HAP-1 (cell line): ENCODE measurements at regions of chr6 and their contacts with region 1.

Region 1: GRCh38 chr6:123415844-123416468 is 220.8 kb downstream of the TRDN start:
- DNase-seq: peak; percentile 63 to 77
- H3K4me3 ChIP-seq: no peak overlapping the region
- H3K4me1 ChIP-seq: peaks cover 34% of the 10 kb centered on the region
- H3K27me3 ChIP-seq: no peaks in the 10 kb centered on the region

Region 2: GRCh38 chr6:123712831-123713230 is 296.9 kb after region 1 on chr6:
- in situ Hi-C with region 1: loop called (anchors 5 kb)
- DNase-seq: no peak
- H3K4me3 ChIP-seq: no peak overlapping the region
- H3K4me1 ChIP-seq: no peaks in the 10 kb centered on the region; the same call in 1 of the 2 replicates
- H3K27me3 ChIP-seq: no peaks in the 10 kb centered on the region